GM12878 (cell line): ENCODE measurements at regions of chr6 and their contacts with region 1.

Region 1: DNA sequence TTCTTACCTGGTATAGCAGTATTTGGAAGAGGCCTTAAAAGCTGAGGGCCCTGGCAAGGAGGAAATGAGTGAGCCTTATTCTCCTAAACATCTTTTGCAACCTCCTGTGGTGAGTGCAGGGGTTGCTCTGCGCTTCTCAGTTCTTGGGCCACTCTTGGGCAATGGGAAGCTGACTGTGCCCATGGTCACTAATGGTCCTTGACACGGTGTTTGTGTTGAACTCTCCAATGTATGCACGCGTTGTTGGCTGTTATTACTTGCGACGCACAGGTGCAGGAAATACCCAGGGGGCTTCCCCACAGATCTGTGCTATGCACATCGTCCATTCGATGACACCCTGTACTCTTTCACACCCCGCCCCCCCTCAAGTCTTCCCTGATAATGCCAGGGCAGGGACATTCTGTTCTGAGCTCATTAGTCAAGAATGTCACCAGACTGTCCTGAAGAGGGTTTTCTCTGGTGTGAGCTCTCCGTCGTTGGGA is 79.7 kb downstream of the EDN1 start:
- DNase-seq: peak; percentile 73
- ATAC-seq: peak; percentile 92
- H3K4me3 ChIP-seq: no peak overlapping the region
- H3K27ac ChIP-seq: peak overlapping the region; percentile 35
- H3K4me1 ChIP-seq: peaks cover 13% of the 10 kb centered on the region
- H3K27me3 ChIP-seq: no peaks in the 10 kb centered on the region
- CTCF ChIP-seq: peak; percentile 25 to 41 (median 30); a peak in 4 of 6 replicates
- EP300 ChIP-seq: peak; percentile 55 to 78; a peak in 2 of 4 replicates
- POLR2A ChIP-seq: no peak
- RAD21 ChIP-seq: peak; percentile 62

Region 2: GRCh38 chr6:12296255-12296573 is 73.6 kb before region 1 on chr6:
- CTCF ChIA-PET with region 1: interaction called, 56 read pairs
- POLR2A ChIA-PET with region 1: interaction called, 5 read pairs
- RAD21 ChIA-PET with region 1: interaction called, 92 read pairs
- SMC1A ChIA-PET with region 1: interaction called, 119 read pairs
- in situ Hi-C with region 1: no loop called
- intact Hi-C with region 1: no loop called
- DNase-seq: no peak
- ATAC-seq: no peak
- H3K4me3 ChIP-seq: no peak overlapping the region
- H3K27ac ChIP-seq: no peak overlapping the region
- H3K4me1 ChIP-seq: peaks cover 8% of the 10 kb centered on the region
- H3K27me3 ChIP-seq: no peaks in the 10 kb centered on the region
- CTCF ChIP-seq: no peak
- EP300 ChIP-seq: no peak
- POLR2A ChIP-seq: no peak
- RAD21 ChIP-seq: no peak

Region 3: GRCh38 chr6:12313992-12314805 is 55.6 kb before region 1 on chr6:
- CTCF ChIA-PET with region 1: interaction called, 17 read pairs
- POLR2A ChIA-PET with region 1: no interaction called
- RAD21 ChIA-PET with region 1: interaction called, 7 read pairs
- SMC1A ChIA-PET with region 1: interaction called, 19 read pairs
- in situ Hi-C with region 1: no loop called
- intact Hi-C with region 1: no loop called
- DNase-seq: no peak
- ATAC-seq: no peak
- H3K4me3 ChIP-seq: no peak overlapping the region
- H3K27ac ChIP-seq: no peak overlapping the region
- H3K4me1 ChIP-seq: no peaks in the 10 kb centered on the region
- H3K27me3 ChIP-seq: no peaks in the 10 kb centered on the region
- CTCF ChIP-seq: no peak
- EP300 ChIP-seq: no peak
- POLR2A ChIP-seq: no peak
- RAD21 ChIP-seq: no peak

Region 4: DNA sequence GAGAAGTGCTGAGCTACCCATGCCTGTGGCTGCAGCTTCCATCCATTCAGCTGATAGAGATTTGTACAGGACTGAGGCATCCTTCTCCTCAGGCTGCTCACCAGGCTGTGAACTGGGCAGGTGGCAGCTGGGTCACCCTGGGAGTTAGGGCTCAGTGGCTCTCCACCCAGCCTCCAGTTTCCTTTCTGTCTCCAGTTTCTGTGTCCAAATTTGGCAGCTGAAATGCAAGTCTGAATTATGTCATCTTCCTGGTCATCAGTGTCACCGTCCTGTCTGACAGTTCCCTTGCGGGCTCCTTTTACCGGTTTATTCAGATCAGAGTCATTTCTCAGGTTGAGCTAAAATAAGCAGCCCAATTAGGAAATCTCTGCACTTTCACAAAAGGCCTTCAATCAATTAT is 13.6 kb after region 1 on chr6:
- CTCF ChIA-PET with region 1: interaction called, 14 read pairs
- POLR2A ChIA-PET with region 1: interaction called, 38 read pairs
- RAD21 ChIA-PET with region 1: interaction called, 30 read pairs
- SMC1A ChIA-PET with region 1: interaction called, 99 read pairs
- in situ Hi-C with region 1: no loop called
- intact Hi-C with region 1: no loop called
- DNase-seq: peak; percentile 72
- ATAC-seq: peak; percentile 98
- H3K4me3 ChIP-seq: no peak overlapping the region
- H3K27ac ChIP-seq: no peak overlapping the region
- H3K4me1 ChIP-seq: peaks cover 11% of the 10 kb centered on the region
- H3K27me3 ChIP-seq: no peaks in the 10 kb centered on the region
- CTCF ChIP-seq: no peak
- EP300 ChIP-seq: peak; percentile 65 to 72; a peak in 2 of 4 replicates
- POLR2A ChIP-seq: no peak
- RAD21 ChIP-seq: no peak